Cardiac septum (tissue), 1 donor: ENCODE measurements at regions of chr2 and their contacts with region 1.

Region 1: DNA sequence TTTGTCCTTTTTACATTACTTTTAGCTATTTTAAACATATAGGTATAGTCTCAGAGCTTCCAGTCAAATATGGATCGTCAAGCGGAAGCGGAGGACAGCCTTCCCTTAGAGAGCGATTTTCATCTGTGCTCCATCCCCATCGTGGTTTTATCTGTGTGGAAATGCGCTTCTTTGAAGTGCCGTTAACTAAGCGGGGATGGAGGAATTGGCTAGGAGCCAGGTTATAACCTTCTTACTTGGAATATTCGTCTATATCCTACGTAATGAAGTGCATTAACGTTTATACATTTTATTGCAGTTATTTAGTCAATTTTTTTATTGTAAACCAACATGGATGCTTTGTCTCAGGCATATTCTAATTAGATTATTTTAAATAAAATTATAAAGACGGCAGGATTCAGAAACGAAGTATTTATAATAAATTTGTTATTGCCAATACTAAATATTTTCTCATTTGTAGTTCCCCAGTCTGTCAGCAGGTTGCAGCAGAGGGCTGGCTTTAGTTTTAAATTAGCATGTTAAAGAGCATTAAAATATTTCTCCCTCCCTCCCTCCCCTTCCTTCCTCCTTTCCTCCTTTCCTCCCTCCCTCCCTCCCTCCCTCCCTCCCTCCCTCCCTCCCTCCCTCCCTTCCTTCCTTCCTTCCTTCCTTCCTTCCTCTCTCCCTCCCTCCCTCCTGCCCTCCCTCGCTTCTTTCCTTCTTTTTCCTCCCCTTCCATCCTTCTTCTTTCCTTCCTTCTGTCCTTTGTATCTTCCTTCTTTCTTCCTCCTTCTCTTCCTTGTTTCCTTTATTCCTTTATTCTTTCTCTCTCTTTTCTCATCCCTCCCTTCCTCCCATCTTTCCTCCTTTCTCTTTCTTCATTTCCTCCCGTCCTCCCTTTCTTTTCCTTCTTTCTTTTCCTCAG is 80.6 kb upstream of the DOCK10 start:
- DNase-seq: no peak

Region 2: GRCh38 chr2:225660262-225661131 is 537.7 kb after region 1 on chr2:
- intact Hi-C with region 1: loop called (anchors 5 kb)
- DNase-seq: peak; percentile 78